ENCODE measurements at regions of chr2 and their contacts with region 1.

Region 1: GRCh38 chr2:222982010-222982908 is 69.7 kb upstream of the KCNE4 start:
- DNase-seq: peak; percentile 85
- H3K4me3 Mint-ChIP-seq: no peak overlapping the region
- H3K27ac Mint-ChIP-seq: peak overlapping the region; percentile 25
- H3K4me1 Mint-ChIP-seq: peaks cover 17% of the 10 kb centered on the region
- H3K27me3 Mint-ChIP-seq: no peaks in the 10 kb centered on the region
- CTCF ChIP-seq: peak; percentile 47

Region 2: DNA sequence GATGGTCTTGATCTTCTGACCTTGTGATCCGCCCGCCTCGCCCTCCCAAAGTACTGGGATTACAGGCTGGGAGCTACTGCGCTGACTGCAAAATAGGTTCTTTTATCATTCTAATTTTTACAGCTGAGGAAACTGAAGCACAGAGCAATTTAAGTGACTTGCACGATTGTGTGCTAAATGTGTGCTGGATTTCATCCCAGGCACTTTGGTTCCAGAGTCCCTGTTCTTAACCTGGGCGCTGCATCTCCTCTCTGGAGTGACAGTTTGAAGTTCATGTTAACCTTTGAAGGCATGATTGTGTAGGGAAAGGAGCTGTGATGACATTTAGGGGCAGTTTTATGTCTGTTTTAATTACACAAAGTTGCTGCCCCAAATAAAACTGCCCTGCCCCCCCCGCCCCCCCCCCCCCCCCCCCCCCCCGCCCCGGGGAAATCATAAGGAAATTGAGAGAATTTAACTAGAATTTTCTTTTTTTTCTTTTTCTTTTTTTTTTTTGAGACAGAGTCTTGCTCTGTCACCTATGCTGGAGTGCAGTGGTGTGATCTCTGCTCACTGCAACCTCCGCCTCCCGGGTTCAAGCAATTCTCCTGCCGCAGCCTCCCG is 115.8 kb before region 1 on chr2:
- CTCF ChIA-PET with region 1: no interaction called
- POLR2A ChIA-PET with region 1: no interaction called
- intact Hi-C with region 1: no loop called
- DNase-seq: no peak
- H3K4me3 Mint-ChIP-seq: no peak overlapping the region
- H3K27ac Mint-ChIP-seq: no peak overlapping the region
- H3K4me1 Mint-ChIP-seq: peaks cover 14% of the 10 kb centered on the region
- H3K27me3 Mint-ChIP-seq: no peaks in the 10 kb centered on the region
- CTCF ChIP-seq: no peak

Region 3: DNA sequence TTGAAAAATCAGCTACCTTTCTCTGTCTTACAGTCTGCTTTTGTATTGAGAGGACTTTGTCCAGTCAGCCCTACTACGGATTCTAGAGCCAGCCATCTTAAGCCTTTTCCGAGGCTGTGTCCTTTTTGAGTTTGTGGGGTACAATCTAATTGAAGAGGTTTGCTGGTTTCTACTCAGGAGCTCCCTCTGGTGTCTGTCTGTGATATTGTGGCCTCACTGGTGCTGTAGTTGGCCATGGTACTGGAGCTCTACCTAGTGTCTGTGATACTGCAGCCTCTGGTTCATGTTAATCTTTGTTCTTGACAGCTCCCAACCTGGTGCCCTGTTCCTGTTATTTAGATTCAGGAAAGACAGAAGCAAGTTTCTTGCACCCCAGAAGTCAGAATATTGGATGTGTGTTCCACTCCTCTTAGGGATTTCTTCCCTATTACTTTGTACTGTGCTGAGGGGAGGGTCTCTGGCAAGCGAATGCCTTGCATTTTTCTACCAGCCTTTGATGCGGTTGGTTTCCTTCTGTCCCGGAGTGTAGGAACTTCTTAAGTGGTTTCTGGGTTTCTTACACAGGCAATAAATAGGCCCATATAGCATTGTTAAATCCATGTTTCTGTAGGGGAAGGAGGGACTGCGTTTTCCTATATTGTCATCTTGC is 42.9 kb before region 1 on chr2:
- CTCF ChIA-PET with region 1: no interaction called
- POLR2A ChIA-PET with region 1: no interaction called
- intact Hi-C with region 1: no loop called
- DNase-seq: peak; percentile 81
- H3K4me3 Mint-ChIP-seq: no peak overlapping the region
- H3K27ac Mint-ChIP-seq: peak overlapping the region; percentile 0
- H3K4me1 Mint-ChIP-seq: peaks cover 7% of the 10 kb centered on the region
- H3K27me3 Mint-ChIP-seq: no peaks in the 10 kb centered on the region
- CTCF ChIP-seq: peak; percentile 82

Region 4: DNA sequence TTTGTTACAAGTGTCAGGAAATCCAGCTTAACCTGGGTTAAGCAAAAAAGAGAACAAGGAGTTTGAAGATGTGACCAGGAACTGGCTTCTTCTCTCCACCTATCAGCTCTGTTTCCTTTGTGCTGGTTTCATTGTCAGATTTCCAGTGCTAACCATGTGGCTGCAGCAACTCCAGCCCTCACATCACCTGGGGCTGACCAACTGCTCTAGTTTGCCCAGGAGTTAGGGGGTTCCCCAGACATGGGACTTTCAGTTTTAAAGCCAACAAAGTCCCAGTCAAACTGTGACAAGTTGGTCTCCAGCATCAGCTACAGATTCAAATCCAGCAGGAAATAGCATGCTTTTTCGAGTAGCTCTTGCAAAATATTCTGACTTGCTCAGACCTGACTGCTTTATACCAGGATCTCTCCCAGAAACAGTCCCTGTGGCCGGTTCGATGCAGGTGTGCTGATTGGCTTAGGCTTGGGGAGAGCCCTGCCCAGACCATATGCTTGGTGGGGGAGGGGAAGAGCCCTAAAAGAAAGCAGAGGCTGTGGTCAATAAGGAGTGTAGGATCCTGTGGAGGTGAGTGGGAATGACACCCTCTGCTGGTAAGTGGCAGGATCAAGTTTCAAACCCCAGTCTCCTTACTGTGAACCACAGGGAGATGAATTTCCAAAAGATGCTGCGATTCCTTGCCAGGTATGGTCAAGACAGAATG is 119.2 kb after region 1 on chr2:
- CTCF ChIA-PET with region 1: interaction called, 18 read pairs
- POLR2A ChIA-PET with region 1: interaction called, 5 read pairs
- intact Hi-C with region 1: loop called (anchors 1 kb)
- DNase-seq: peak; percentile 93
- H3K4me3 Mint-ChIP-seq: no peak overlapping the region
- H3K27ac Mint-ChIP-seq: no peak overlapping the region
- H3K4me1 Mint-ChIP-seq: peaks cover 13% of the 10 kb centered on the region
- H3K27me3 Mint-ChIP-seq: no peaks in the 10 kb centered on the region
- CTCF ChIP-seq: peak; percentile 59

Region 5: GRCh38 chr2:223235986-223236385 is 253.7 kb after region 1 on chr2:
- CTCF ChIA-PET with region 1: interaction called, 3 read pairs
- POLR2A ChIA-PET with region 1: interaction called, 3 read pairs
- intact Hi-C with region 1: loop called (anchors 10 kb)
- DNase-seq: peak; percentile 67
- H3K4me3 Mint-ChIP-seq: no peak overlapping the region
- H3K27ac Mint-ChIP-seq: peak overlapping the region; percentile 14
- H3K4me1 Mint-ChIP-seq: peaks cover 37% of the 10 kb centered on the region
- H3K27me3 Mint-ChIP-seq: no peaks in the 10 kb centered on the region
- CTCF ChIP-seq: no peak

Region 6: DNA sequence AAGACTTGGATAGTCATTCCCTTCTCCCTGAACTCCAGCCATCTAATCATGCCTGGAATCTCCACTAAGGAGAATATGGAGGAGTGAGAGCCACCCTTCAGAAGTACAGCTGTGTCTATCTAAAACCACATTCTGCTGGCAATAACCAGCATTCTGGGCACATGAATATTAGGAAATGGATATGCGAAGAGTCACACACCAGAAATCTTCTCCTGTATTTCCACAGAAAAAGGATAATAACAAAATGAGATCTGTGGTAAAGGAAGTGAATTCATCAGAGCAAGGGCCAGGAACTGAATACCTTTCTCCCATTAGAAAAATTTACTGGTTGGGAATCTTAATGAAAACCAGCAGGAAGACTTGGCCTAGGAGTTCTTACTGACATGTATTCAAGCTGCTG is 401.1 kb after region 1 on chr2:
- CTCF ChIA-PET with region 1: interaction called, 4 read pairs
- POLR2A ChIA-PET with region 1: no interaction called
- intact Hi-C with region 1: loop called (anchors 2 kb)
- DNase-seq: no peak
- H3K4me3 Mint-ChIP-seq: no peak overlapping the region
- H3K27ac Mint-ChIP-seq: no peak overlapping the region
- H3K4me1 Mint-ChIP-seq: no peaks in the 10 kb centered on the region
- H3K27me3 Mint-ChIP-seq: no peaks in the 10 kb centered on the region
- CTCF ChIP-seq: no peak

Region 7: GRCh38 chr2:223601932-223602666 is 619.8 kb after region 1 on chr2 and contains the start of gene SCG2:
- CTCF ChIA-PET with region 1: interaction called, 3 read pairs
- POLR2A ChIA-PET with region 1: no interaction called
- intact Hi-C with region 1: loop called (anchors 1 kb)
- DNase-seq: peak; percentile 78
- H3K4me3 Mint-ChIP-seq: no peak within 1 kb of the TSS
- H3K27ac Mint-ChIP-seq: no peak within 1 kb of the TSS
- H3K4me1 Mint-ChIP-seq: peaks cover 17% of the 10 kb centered on the region
- H3K27me3 Mint-ChIP-seq: no peaks in the 10 kb centered on the region
- CTCF ChIP-seq: peak; percentile 26
- total RNA-seq, gene SCG2: 0.52 and 0.84 TPM in 2 replicates